ENCODE measurements at regions of chr4 and their contacts with region 1.

Region 1: DNA sequence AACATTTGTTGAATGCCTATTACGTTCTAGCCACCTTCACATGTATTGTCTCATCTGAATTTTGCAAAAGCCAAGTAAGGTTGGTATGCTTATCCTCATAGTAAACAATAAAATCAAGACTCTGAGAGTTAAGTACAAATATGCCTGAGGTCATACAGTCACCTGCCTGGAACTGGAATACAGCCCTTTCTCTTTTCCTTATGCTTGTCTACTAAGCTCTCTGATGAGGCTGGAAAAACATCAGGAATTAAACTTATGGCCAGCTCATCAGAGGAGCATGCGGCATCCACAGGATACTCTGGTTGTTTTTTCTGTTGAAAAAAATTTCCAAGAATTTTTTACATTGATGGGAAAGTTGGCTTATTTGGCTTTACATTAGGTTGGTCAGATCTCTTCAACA is 35.5 kb downstream of the NCAPG start:
- DNase-seq: no peak
- H3K4me3 ChIP-seq: no peak overlapping the region
- H3K27ac ChIP-seq: no peak overlapping the region
- H3K4me1 ChIP-seq: no peaks in the 10 kb centered on the region
- H3K27me3 ChIP-seq: no peaks in the 10 kb centered on the region
- CTCF ChIP-seq: no peak
- EP300 ChIP-seq: no peak
- POLR2A ChIP-seq: no peak
- RAD21 ChIP-seq: no peak

Region 2: GRCh38 chr4:17817020-17817419 is 29.2 kb before region 1 on chr4:
- CTCF ChIA-PET with region 1: interaction called, 11 read pairs
- POLR2A ChIA-PET with region 1: interaction called, 4 read pairs
- DNase-seq: no peak
- H3K4me3 ChIP-seq: no peak overlapping the region
- H3K27ac ChIP-seq: no peak overlapping the region
- H3K4me1 ChIP-seq: no peaks in the 10 kb centered on the region
- H3K27me3 ChIP-seq: no peaks in the 10 kb centered on the region
- CTCF ChIP-seq: peak in 2 of 3 experiments; percentile 4 to 45; a peak in 2 of 4 replicates
- EP300 ChIP-seq: no peak
- POLR2A ChIP-seq: no peak
- RAD21 ChIP-seq: peak; percentile 41 to 43

Region 3: GRCh38 chr4:17859793-17860406 is 13.6 kb after region 1 on chr4:
- CTCF ChIA-PET with region 1: no interaction called
- POLR2A ChIA-PET with region 1: no interaction called
- DNase-seq: no peak
- H3K4me3 ChIP-seq: no peak overlapping the region
- H3K27ac ChIP-seq: no peak overlapping the region
- H3K4me1 ChIP-seq: no peaks in the 10 kb centered on the region
- H3K27me3 ChIP-seq: no peaks in the 10 kb centered on the region
- CTCF ChIP-seq: no peak
- EP300 ChIP-seq: no peak
- POLR2A ChIP-seq: no peak
- RAD21 ChIP-seq: no peak

Region 4: GRCh38 chr4:17884063-17884462 is 37.8 kb after region 1 on chr4:
- CTCF ChIA-PET with region 1: no interaction called
- POLR2A ChIA-PET with region 1: no interaction called
- DNase-seq: no peak
- H3K4me3 ChIP-seq: no peak overlapping the region
- H3K27ac ChIP-seq: no peak overlapping the region
- H3K4me1 ChIP-seq: peaks cover 0 to 5% (median 0%) of the 10 kb centered on the region in 4 experiments; a peak in 1 of 7 replicates
- H3K27me3 ChIP-seq: no peaks in the 10 kb centered on the region
- CTCF ChIP-seq: no peak
- EP300 ChIP-seq: no peak
- POLR2A ChIP-seq: no peak
- RAD21 ChIP-seq: no peak